OCI-LY7 (cell line): ENCODE measurements at regions of chr20 and their contacts with region 1.

Region 1: GRCh38 chr20:40990542-40991120 is 38.0 kb upstream of the TOP1 start:
- DNase-seq: peak; percentile 92
- H3K4me3 ChIP-seq: peak overlapping the region; percentile 51
- H3K27ac ChIP-seq: peak overlapping the region; percentile 98
- H3K4me1 ChIP-seq: peaks cover 98% of the 10 kb centered on the region
- CTCF ChIP-seq: peak; percentile 90

Region 2: DNA sequence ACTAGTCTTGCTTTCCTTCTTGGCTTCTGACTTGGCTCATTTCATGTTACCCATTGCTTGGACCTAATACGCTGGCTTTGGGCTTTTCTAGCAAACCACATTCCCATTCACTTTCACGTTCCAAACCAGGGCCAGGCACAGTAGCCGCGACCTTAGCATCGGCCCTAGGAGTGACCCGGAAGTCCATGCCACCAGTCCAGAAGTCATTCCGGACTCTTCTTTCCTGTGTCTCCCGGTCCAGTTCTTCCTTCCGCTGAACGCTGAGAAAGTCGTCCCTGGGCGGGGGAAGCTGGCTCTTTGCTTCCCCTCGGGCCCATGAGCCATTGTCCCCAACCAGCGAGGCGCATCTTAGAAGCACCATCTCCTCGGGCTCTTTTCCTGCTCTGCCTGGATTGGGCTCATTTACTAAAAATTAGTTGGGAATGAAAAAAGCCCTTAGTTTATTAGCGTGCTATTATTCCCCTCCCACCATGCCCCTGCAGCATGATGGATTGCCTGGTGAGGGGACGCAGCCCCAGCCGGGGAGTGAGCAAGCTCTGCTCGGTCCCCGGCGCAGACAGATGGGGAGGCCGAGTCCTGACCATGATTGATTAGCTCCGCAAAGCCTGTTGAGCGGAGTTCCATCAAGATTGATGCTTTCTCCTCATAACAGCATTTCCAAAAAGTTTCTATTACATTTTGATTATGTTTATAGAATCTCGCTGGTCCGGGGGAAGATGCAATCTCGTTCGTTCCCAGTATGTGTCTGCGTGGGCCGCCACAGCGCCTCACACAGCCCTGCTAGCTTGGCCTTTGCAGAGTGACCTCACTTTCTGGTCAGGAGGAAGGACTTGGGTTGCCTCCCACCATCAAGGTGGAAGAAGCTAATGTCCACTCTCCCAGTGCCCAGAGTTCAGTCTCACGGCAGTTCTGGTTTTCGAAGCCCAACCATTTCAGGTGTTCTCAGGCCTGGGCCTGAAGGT is 77.1 kb before region 1 on chr20:
- CTCF ChIA-PET with region 1: no interaction called
- POLR2A ChIA-PET with region 1: no interaction called
- intact Hi-C with region 1: no loop called
- DNase-seq: no peak
- H3K4me3 ChIP-seq: no peak overlapping the region
- H3K27ac ChIP-seq: no peak overlapping the region
- H3K4me1 ChIP-seq: peaks cover 7% of the 10 kb centered on the region
- CTCF ChIP-seq: no peak

Region 3: DNA sequence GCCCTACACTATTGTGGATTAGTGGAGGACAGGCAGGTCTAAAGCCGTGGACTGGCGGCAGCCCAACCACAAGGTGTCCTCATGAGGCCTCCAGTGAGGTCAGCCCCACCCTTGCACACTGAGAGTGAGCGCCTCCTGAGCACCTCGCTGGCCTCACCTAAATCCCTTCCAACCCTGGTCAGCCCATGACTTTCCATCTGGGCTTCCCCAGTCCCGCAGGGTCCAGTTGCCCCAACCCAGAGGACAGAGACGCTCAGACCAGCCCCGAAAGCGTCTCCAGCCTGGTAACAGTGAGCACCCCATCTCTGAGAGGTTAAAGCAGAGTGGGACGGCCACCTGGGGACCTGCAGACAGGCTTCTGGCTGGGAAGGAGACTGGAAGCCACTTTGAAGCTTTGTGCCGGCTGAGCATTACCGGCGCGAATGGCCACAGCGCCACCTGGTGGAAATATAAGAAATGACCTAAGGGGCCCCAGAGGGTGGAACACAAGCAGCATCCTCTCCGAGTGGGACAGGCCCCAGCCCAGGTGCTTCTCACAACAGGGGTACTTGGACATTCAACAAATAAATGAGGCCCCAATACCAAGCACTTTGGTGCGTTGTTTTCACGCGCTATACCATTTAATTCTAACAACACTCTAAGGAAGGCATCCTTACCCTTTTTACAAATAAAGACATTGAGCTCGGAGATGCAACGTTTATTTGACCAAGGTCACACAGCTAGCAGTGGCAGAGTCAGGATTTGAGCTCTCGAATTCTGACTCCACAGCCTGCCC is 27.7 kb before region 1 on chr20:
- CTCF ChIA-PET with region 1: interaction called, 4 read pairs
- POLR2A ChIA-PET with region 1: no interaction called
- intact Hi-C with region 1: loop called (anchors 1 kb)
- DNase-seq: peak; percentile 80
- H3K4me3 ChIP-seq: no peak overlapping the region
- H3K27ac ChIP-seq: no peak overlapping the region
- H3K4me1 ChIP-seq: peaks cover 18% of the 10 kb centered on the region
- CTCF ChIP-seq: peak; percentile 95

Region 4: GRCh38 chr20:41011551-41012067 is 21.0 kb after region 1 on chr20:
- CTCF ChIA-PET with region 1: interaction called, 56 read pairs
- POLR2A ChIA-PET with region 1: interaction called, 302 read pairs
- intact Hi-C with region 1: loop called (anchors 1 kb)
- DNase-seq: peak; percentile 99
- H3K4me3 ChIP-seq: peak overlapping the region; percentile 60
- H3K27ac ChIP-seq: peak overlapping the region; percentile 99
- H3K4me1 ChIP-seq: peaks cover 89% of the 10 kb centered on the region
- CTCF ChIP-seq: no peak

Region 5: DNA sequence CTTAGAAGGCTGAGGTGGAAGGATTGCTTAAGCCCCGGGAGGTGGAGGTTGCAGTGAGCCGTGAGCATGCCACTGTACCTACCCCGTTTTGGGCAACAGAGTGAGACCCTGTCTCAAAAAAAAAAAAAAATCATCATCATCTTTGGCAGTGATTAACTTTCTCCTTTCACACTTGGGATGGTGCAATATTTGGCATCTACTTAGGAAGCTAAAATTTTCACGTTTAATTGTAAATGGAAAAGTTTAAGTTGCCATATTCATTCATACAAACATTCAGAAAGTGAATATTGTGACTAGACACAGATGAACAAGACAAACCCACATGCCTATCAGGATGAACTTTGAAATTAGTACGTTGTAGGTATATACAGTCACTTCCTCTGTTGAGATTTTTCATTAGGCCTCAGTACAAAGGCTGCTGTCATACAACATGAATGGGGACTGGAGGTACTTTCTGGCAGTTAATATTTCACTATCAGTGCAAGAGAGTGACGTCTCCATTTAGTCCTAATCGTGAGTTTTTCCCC is 48.3 kb after region 1 on chr20:
- CTCF ChIA-PET with region 1: interaction called, 4 read pairs
- POLR2A ChIA-PET with region 1: interaction called, 88 read pairs
- intact Hi-C with region 1: no loop called
- DNase-seq: no peak
- H3K4me3 ChIP-seq: no peak overlapping the region
- H3K27ac ChIP-seq: no peak overlapping the region
- H3K4me1 ChIP-seq: peaks cover 33% of the 10 kb centered on the region
- CTCF ChIP-seq: no peak

Region 6: GRCh38 chr20:41072190-41072863 is 81.7 kb after region 1 on chr20:
- CTCF ChIA-PET with region 1: interaction called, 10 read pairs
- POLR2A ChIA-PET with region 1: interaction called, 23 read pairs
- intact Hi-C with region 1: no loop called
- DNase-seq: no peak
- H3K4me3 ChIP-seq: no peak overlapping the region
- H3K27ac ChIP-seq: peak overlapping the region; percentile 21
- H3K4me1 ChIP-seq: peaks cover 41% of the 10 kb centered on the region
- CTCF ChIP-seq: no peak